Activated CD4-positive, alpha-beta T cell treated with anti-CD3 and anti-CD28 coated beads for 36 hours (primary cell): ENCODE measurements at regions of chr3 and their contacts with region 1.

Region 1: DNA sequence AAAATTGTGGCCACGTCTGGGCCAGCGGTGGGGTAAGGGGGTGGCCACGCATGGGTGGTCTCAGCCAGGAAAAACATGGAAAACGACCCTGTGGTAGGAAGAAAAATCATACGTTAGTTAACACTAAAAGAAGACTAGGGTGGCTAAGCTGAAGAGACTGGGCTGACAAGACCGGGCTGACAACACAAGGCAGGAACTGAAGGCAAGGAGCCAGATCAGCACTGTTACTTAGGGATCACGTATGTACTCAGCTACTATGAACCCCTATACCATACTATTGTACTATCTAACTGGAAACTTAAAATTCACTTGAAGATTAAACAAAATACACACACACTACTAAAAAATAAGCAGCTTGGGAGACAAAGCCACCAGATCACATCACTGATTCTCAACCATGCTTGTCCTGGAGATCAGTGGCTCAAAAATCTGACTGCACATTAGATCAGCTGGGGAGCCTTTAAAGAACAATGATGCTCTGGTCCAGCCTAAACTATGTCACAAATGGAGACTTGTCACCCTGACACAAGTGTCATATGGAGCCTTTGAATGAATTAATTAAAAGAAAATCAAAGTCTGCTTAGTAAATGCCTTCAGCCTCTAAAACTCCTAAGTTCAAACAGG is 442.2 kb downstream of the SHQ1 start:
- DNase-seq: no peak
- ATAC-seq: no peak
- H3K4me3 Mint-ChIP-seq: no peak overlapping the region
- H3K27ac Mint-ChIP-seq: no peak overlapping the region
- H3K4me1 Mint-ChIP-seq: peaks cover 85% of the 10 kb centered on the region
- H3K27me3 Mint-ChIP-seq: no peaks in the 10 kb centered on the region

Region 2: GRCh38 chr3:72384602-72385001 is 21.5 kb before region 1 on chr3:
- CTCF ChIA-PET with region 1: interaction called, 4 read pairs
- POLR2A ChIA-PET with region 1: no interaction called
- intact Hi-C with region 1: loop called in 1 of 2 experiments (anchors 2 kb)
- DNase-seq: no peak
- ATAC-seq: peak; percentile 26
- H3K4me3 Mint-ChIP-seq: no peak overlapping the region
- H3K27ac Mint-ChIP-seq: no peak overlapping the region
- H3K4me1 Mint-ChIP-seq: peaks cover 94% of the 10 kb centered on the region
- H3K27me3 Mint-ChIP-seq: no peaks in the 10 kb centered on the region

Region 3: GRCh38 chr3:72418244-72418643 is 12.2 kb after region 1 on chr3:
- CTCF ChIA-PET with region 1: interaction called, 4 read pairs
- POLR2A ChIA-PET with region 1: no interaction called
- intact Hi-C with region 1: loop called in 1 of 2 experiments (anchors 1 kb)
- DNase-seq: no peak
- ATAC-seq: peak; percentile 73
- H3K4me3 Mint-ChIP-seq: no peak overlapping the region
- H3K27ac Mint-ChIP-seq: no peak overlapping the region
- H3K4me1 Mint-ChIP-seq: peaks cover 72% of the 10 kb centered on the region
- H3K27me3 Mint-ChIP-seq: no peaks in the 10 kb centered on the region

Region 4: GRCh38 chr3:72439321-72440183 is 33.5 kb after region 1 on chr3:
- CTCF ChIA-PET with region 1: interaction called, 4 read pairs
- POLR2A ChIA-PET with region 1: no interaction called
- intact Hi-C with region 1: loop called in 1 of 2 experiments (anchors 5 kb)
- DNase-seq: no peak
- ATAC-seq: no peak
- H3K4me3 Mint-ChIP-seq: no peak overlapping the region
- H3K27ac Mint-ChIP-seq: no peak overlapping the region
- H3K4me1 Mint-ChIP-seq: peaks cover 85% of the 10 kb centered on the region
- H3K27me3 Mint-ChIP-seq: no peaks in the 10 kb centered on the region